A549 (cell line): ENCODE measurements at regions of chr1 and their contacts with region 1.

Region 1: DNA sequence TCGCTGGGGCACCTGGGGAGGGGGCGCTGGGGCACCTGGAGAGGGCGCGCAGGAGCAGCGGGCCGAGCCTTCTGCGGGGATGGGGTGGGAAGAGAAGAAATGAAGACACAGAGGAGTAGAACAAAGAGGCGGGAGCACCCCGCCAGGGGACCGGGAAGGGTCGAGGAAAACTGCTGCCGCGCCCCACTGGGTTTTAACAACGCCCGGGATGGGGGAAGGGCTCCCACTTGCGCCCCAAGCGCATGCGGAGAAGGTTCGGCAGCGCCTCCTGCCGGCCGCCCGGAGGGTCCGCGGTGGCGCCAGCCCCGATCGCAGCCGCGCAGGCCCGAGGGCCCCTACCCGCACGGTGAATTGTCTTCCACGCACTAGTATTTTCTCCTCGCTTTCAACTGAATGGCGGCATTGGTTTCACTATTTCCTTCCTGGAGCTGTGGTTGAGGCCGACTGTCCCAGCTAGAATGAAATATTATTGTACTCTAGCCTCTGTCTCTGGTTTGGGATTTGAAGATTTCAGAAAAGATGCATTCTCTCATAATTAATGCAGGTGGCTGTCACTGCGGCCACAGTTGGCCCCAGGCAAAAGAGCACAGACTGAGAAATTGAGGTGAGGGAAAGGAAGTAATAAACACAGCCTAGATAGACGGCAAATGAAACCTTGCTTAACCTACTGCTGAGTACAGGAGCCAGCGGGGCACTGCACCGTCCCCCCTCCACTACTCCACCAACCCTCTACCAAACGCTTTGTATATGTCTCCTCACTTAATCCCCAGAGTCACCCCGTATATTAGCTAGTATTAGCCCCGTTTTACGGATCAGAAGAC is 57.3 kb downstream of the MAB21L3 start:
- DNase-seq: peak; percentile 48 to 51
- ATAC-seq: peak; percentile 94 to 98
- H3K4me3 ChIP-seq: peak overlapping the region; percentile 74
- H3K27ac ChIP-seq: peak overlapping the region; percentile 87 to 93
- H3K4me1 ChIP-seq: no peaks in the 10 kb centered on the region
- CTCF ChIP-seq: peak; percentile 86
- EP300 ChIP-seq: no peak
- POLR2A ChIP-seq: no peak
- RAD21 ChIP-seq: peak; percentile 11 to 61; a peak in 2 of 5 replicates

Region 2: GRCh38 chr1:116151739-116152576 is 16.5 kb before region 1 on chr1:
- CTCF ChIA-PET with region 1: interaction called, 13 read pairs
- POLR2A ChIA-PET with region 1: no interaction called
- DNase-seq: peak; percentile 54 to 77
- ATAC-seq: peak; percentile 98 to 100
- H3K4me3 ChIP-seq: peak overlapping the region; percentile 43
- H3K27ac ChIP-seq: peak overlapping the region; percentile 80 to 93
- H3K4me1 ChIP-seq: peaks cover 10% of the 10 kb centered on the region
- CTCF ChIP-seq: peak; percentile 75
- EP300 ChIP-seq: no peak
- POLR2A ChIP-seq: peak; percentile 21; the same call in 1 of the 2 replicates
- RAD21 ChIP-seq: peak; percentile 44 to 69

Region 3: DNA sequence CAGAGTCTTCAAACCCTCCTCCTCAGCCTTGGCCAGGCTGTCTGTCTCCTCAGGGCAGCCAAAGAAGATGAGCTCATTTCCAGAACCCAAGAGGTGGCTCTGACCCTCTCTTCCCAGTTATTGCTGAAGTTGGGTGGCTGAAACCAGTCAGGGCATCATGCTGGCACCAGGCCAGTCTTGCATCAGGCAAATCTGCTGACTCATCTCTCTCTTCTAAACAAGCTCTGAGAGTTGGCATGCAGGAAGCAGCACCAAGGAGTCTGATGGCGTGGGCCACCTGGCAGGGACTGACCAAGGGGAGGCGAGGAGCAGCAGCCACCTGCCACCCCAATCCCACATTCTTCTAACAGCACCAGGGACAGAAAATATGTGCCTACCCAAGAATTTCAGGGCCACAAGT is 99.7 kb after region 1 on chr1:
- CTCF ChIA-PET with region 1: no interaction called
- POLR2A ChIA-PET with region 1: no interaction called
- DNase-seq: peak; percentile 4 to 53
- ATAC-seq: no peak
- H3K4me3 ChIP-seq: no peak overlapping the region
- H3K27ac ChIP-seq: peak overlapping the region in 1 of 2 experiments; percentile 58; a peak in 2 of 6 replicates
- H3K4me1 ChIP-seq: peaks cover 5% of the 10 kb centered on the region; the same call in 2 of the 3 replicates
- CTCF ChIP-seq: no peak
- EP300 ChIP-seq: no peak
- POLR2A ChIP-seq: no peak
- RAD21 ChIP-seq: no peak